Mammary epithelial cell (primary cell): ENCODE measurements at regions of chr3 and their contacts with region 1.

Region 1: GRCh38 chr3:15042936-15043335 is 22.2 kb downstream of the MRPS25 start:
- DNase-seq: no peak
- H3K4me3 ChIP-seq: no peak overlapping the region
- H3K27ac ChIP-seq: no peak overlapping the region
- H3K4me1 ChIP-seq: no peaks in the 10 kb centered on the region
- H3K27me3 ChIP-seq: no peaks in the 10 kb centered on the region
- CTCF ChIP-seq: no peak

Region 2: DNA sequence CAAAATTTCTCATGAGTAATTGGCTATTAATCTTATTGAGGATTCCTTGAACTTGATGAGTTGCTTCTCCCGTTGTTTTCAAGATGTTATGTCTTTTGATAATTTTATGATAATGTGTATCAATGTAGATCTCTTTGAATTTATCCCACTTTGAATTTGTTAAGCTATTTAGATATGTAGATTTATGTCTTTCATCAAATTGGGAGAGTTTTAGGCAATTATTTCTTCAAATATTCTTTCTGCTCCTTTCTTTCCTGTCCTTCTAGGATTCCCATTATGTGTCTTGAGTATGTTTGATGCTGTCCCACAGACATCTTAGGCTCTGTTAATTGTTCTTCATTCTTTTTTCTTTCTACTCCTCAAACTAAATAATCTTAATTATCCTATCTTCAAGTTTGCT is 292.3 kb before region 1 on chr3:
- CTCF ChIA-PET with region 1: no interaction called
- dilution Hi-C with region 1: no loop called
- in situ Hi-C with region 1: no loop called
- intact Hi-C with region 1: no loop called
- DNase-seq: no peak
- H3K4me3 ChIP-seq: no peak overlapping the region
- H3K27ac ChIP-seq: no peak overlapping the region
- H3K4me1 ChIP-seq: no peaks in the 10 kb centered on the region
- H3K27me3 ChIP-seq: peaks cover 2% of the 10 kb centered on the region
- CTCF ChIP-seq: no peak

Region 3: GRCh38 chr3:14771593-14772486 is 271.1 kb before region 1 on chr3:
- CTCF ChIA-PET with region 1: no interaction called
- dilution Hi-C with region 1: no loop called
- in situ Hi-C with region 1: no loop called
- intact Hi-C with region 1: no loop called
- DNase-seq: no peak
- H3K4me3 ChIP-seq: no peak overlapping the region
- H3K27ac ChIP-seq: no peak overlapping the region
- H3K4me1 ChIP-seq: no peaks in the 10 kb centered on the region
- H3K27me3 ChIP-seq: no peaks in the 10 kb centered on the region
- CTCF ChIP-seq: no peak

Region 4: DNA sequence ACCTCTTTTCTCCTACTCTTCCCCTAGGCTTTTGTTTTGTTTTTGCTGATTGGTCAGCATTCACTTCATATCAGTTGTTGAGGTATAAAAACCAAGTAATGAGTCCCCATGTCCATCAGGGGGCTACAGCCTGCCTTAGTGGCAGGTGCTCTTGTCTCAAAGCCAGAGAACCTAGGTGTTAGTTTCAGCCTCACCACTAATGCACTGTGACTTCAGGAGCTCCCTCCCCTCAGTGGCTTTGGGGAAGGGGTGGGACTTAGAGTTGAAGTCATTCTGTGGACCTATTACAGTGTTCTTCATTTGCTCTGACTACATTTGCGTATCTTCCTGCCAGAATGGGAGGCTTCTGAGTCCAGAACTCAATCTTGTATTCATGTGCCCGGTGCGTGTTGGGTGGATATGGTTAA is 53.9 kb before region 1 on chr3:
- CTCF ChIA-PET with region 1: no interaction called
- dilution Hi-C with region 1: loop called (anchors 10 kb)
- in situ Hi-C with region 1: no loop called
- intact Hi-C with region 1: no loop called
- DNase-seq: no peak
- H3K4me3 ChIP-seq: no peak overlapping the region
- H3K27ac ChIP-seq: no peak overlapping the region
- H3K4me1 ChIP-seq: peaks cover 7% of the 10 kb centered on the region
- H3K27me3 ChIP-seq: no peaks in the 10 kb centered on the region
- CTCF ChIP-seq: no peak

Region 5: DNA sequence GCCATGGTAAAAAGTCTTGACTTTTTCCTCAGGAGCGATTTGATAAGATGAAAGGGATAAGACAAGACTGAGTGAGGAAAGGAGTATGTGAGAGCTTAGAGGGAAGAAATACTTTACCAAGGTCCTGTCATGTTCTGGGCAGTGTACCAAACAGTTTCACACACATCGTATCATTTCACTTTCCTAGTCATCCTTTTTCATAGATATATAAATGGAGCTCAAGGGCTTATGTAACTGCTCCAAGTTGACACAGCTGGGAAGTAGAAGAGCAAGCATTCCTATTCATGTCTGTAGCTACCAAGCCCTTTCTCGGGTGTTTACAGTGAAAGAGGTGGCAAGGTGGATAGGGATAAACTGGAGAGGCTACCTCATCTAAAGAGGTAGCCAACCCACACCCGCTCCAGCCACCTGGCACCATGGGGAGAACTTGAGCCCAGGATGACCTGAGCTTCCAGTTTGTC is 35.2 kb before region 1 on chr3:
- CTCF ChIA-PET with region 1: no interaction called
- dilution Hi-C with region 1: loop called (anchors 5 kb)
- in situ Hi-C with region 1: no loop called
- intact Hi-C with region 1: no loop called
- DNase-seq: peak; percentile 9
- H3K4me3 ChIP-seq: no peak overlapping the region
- H3K27ac ChIP-seq: no peak overlapping the region
- H3K4me1 ChIP-seq: peaks cover 16% of the 10 kb centered on the region
- H3K27me3 ChIP-seq: no peaks in the 10 kb centered on the region
- CTCF ChIP-seq: no peak

Region 6: DNA sequence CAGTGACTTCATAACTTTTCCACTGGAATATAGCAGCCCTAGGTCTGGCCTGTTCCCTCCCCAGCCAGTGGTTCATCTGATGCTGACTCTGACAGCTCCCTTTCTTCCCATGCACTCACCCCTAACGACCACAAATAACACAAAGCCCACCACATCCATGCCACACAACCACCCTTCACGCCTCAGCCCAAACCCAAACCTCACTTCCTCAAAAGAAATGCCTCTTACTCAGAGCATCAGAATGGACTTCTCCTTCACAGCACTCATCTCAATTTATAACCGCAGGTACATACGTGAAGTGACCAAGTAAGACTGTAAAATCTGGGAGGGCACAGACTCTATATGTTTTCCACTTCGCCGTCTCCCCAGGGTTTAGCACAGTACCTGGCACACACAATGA is 55.0 kb after region 1 on chr3:
- CTCF ChIA-PET with region 1: no interaction called
- dilution Hi-C with region 1: no loop called
- in situ Hi-C with region 1: no loop called
- intact Hi-C with region 1: no loop called
- DNase-seq: peak; percentile 31
- H3K4me3 ChIP-seq: peak overlapping the region; percentile 87 to 95 (median 95)
- H3K27ac ChIP-seq: peak overlapping the region; percentile 76
- H3K4me1 ChIP-seq: peaks cover 13% of the 10 kb centered on the region
- H3K27me3 ChIP-seq: no peaks in the 10 kb centered on the region
- CTCF ChIP-seq: no peak